Uterus (tissue), 4 donors: ENCODE measurements at regions of chr5 and their contacts with region 1.

Region 1: GRCh38 chr5:75336625-75337339 is at the start of gene HMGCR:
- DNase-seq: peak; percentile 97 to 98
- H3K4me3 ChIP-seq: peak within 1 kb of the TSS; percentile 71 to 100
- H3K27ac ChIP-seq: peak within 1 kb of the TSS; percentile 85 to 93
- H3K4me1 ChIP-seq: peaks cover 0 to 7% of the 10 kb centered on the region in 2 donors
- H3K27me3 ChIP-seq: no peaks in the 10 kb centered on the region
- CTCF ChIP-seq: peak in 2 of 4 experiments; percentile 21 to 24
- POLR2A ChIP-seq: peak; percentile 53 to 70
- total RNA-seq, gene HMGCR: 3.3 to 132 (median 14.1) TPM

Region 2: GRCh38 chr5:74684900-74685851 is 651.6 kb before region 1 on chr5 and contains the start of gene HEXB:
- intact Hi-C with region 1: loop called (anchors 5 kb)
- DNase-seq: peak; percentile 88 to 89
- H3K4me3 ChIP-seq: peak within 1 kb of the TSS; percentile 73 to 76
- H3K27ac ChIP-seq: peak within 1 kb of the TSS; percentile 88
- H3K4me1 ChIP-seq: no peaks in the 10 kb centered on the region
- H3K27me3 ChIP-seq: no peaks in the 10 kb centered on the region
- CTCF ChIP-seq: peak in 1 of 4 experiments; percentile 6
- POLR2A ChIP-seq: peak; percentile 82 to 86
- total RNA-seq, gene HEXB: 115 to 195 (median 146) TPM

Region 3: GRCh38 chr5:75021219-75021618 is 315.6 kb before region 1 on chr5:
- intact Hi-C with region 1: no loop called
- DNase-seq: no peak
- H3K4me3 ChIP-seq: no peak overlapping the region
- H3K27ac ChIP-seq: no peak overlapping the region
- H3K4me1 ChIP-seq: no peaks in the 10 kb centered on the region
- H3K27me3 ChIP-seq: no peaks in the 10 kb centered on the region
- CTCF ChIP-seq: no peak
- POLR2A ChIP-seq: no peak

Region 4: DNA sequence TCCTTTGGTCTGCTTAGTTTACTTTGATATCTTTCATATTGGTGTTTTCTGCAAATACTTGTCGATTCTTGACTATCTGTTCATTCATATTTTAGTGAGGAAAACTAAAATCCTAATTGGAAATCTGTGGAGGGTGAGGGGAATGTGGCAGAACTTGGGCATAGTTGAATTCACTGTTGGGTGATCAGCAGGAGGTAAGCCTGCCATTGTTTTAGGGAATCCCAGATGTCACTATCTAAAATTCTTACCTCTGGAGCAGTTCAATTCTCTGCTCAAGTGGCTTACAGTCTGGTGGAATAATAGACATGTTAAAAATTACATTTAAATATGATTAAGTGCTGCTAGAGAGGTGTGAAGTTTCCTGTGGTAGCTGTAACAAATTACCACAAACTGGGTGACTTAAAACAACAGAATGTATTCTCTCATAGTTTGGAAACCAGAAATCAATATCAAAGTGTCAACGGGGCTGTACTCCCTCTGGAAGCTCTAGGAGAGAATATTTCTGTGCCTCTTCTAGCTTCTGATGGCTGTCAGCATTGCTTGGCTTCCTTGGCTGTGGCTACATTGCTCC is 194.1 kb before region 1 on chr5:
- intact Hi-C with region 1: no loop called
- DNase-seq: no peak
- H3K4me3 ChIP-seq: no peak overlapping the region
- H3K27ac ChIP-seq: no peak overlapping the region
- H3K4me1 ChIP-seq: no peaks in the 10 kb centered on the region
- H3K27me3 ChIP-seq: no peaks in the 10 kb centered on the region
- CTCF ChIP-seq: no peak
- POLR2A ChIP-seq: no peak

Region 5: DNA sequence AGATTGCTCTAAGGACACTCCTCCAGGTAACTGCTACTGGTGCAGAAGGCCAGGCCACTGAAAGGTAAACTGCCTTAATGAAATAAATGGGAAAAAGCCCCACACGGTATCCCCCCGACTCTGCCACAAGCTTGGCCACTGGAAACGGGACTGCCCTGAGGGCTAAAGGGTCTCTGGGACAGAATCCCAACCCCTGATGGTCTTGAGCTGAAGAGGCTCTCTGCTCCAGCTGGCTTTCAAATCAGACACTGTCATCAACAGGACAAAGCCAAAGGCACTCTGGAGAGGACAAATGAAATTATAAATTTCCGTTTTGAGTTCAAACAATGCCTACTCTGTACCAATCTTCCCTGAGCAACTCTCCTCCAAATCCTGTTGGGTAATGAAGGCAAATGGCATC is 33.4 kb before region 1 on chr5:
- intact Hi-C with region 1: no loop called
- DNase-seq: no peak
- H3K4me3 ChIP-seq: no peak overlapping the region
- H3K27ac ChIP-seq: no peak overlapping the region
- H3K4me1 ChIP-seq: no peaks in the 10 kb centered on the region
- H3K27me3 ChIP-seq: no peaks in the 10 kb centered on the region
- CTCF ChIP-seq: no peak
- POLR2A ChIP-seq: no peak